Heart left ventricle (tissue), 16 donors: ENCODE measurements at regions of chr3 and their contacts with region 1.

Region 1: DNA sequence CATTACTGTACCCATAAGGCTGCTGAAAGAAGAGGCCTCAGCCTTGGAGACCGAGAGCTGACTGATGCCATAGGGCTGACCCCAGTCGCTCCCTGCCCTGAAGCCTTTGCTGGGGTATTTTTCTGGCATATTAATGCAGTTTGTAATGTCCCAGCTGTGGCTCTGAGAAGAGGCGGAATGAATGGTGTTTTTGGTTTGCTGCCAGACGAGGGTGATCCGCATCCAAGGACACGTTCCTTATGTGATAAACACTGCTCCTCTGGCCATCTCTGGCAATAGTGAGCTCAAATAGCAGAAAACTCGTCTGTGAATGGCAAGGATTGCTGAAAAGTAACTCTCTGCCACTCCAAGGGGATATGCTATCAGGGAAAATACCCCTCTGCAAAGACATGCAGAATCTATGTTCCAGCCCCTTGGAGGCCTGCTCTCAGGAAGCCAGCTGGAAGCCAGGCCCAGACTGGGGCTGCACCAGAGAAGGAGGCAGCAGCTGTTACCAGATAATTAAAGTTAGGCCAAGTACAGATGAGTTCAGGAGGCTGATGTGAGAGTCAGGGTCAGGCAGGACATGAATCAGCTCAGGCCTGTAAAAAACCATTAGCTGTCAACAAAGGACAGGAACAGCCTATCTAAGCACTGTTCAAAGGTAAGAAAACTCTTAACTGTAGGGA is 28.9 kb upstream of the KLHL6 start:
- DNase-seq: peak; percentile 54 to 76 (median 65)
- ATAC-seq: peak; percentile 65 to 86 (median 79)
- H3K4me3 ChIP-seq: no peak overlapping the region
- H3K27ac ChIP-seq: peak overlapping the region; percentile 59 to 85 (median 71)
- H3K4me1 ChIP-seq: peaks cover 3 to 69% (median 51%) of the 10 kb centered on the region in 12 donors
- H3K27me3 ChIP-seq: no peaks in the 10 kb centered on the region
- CTCF ChIP-seq: peak in 1 of 12 donors; percentile 9
- POLR2A ChIP-seq: no peak

Region 2: GRCh38 chr3:183619624-183620251 is 35.4 kb after region 1 on chr3:
- intact Hi-C with region 1: loop called in 2 of 10 experiments (anchors 5 kb)
- DNase-seq: no peak
- ATAC-seq: peak; percentile 22 to 57 (median 39)
- H3K4me3 ChIP-seq: no peak overlapping the region
- H3K27ac ChIP-seq: no peak overlapping the region
- H3K4me1 ChIP-seq: peaks cover 0 to 11% (median 3%) of the 10 kb centered on the region in 12 donors
- H3K27me3 ChIP-seq: no peaks in the 10 kb centered on the region
- CTCF ChIP-seq: no peak
- POLR2A ChIP-seq: no peak

Region 3: GRCh38 chr3:183629546-183630301 is 45.3 kb after region 1 on chr3:
- intact Hi-C with region 1: loop called in 3 of 10 experiments (anchors 5 kb)
- DNase-seq: no peak
- ATAC-seq: peak in 3 of 4 donors; percentile 41 to 61 (median 55)
- H3K4me3 ChIP-seq: no peak overlapping the region
- H3K27ac ChIP-seq: peak overlapping the region in 11 of 12 donors; percentile 32 to 89 (median 70)
- H3K4me1 ChIP-seq: peaks cover 0 to 45% (median 11%) of the 10 kb centered on the region in 12 donors
- H3K27me3 ChIP-seq: no peaks in the 10 kb centered on the region
- CTCF ChIP-seq: no peak
- POLR2A ChIP-seq: no peak